ENCODE measurements at regions of chr12 and their contacts with region 1.

Region 1: GRCh38 chr12:106903241-106903945 is 52.3 kb upstream of the TMEM263 start:
- DNase-seq: peak; percentile 56
- H3K4me3 ChIP-seq: peak overlapping the region; percentile 57
- H3K27ac ChIP-seq: no peak overlapping the region
- H3K27me3 ChIP-seq: no peaks in the 10 kb centered on the region
- CTCF ChIP-seq: no peak

Region 2: DNA sequence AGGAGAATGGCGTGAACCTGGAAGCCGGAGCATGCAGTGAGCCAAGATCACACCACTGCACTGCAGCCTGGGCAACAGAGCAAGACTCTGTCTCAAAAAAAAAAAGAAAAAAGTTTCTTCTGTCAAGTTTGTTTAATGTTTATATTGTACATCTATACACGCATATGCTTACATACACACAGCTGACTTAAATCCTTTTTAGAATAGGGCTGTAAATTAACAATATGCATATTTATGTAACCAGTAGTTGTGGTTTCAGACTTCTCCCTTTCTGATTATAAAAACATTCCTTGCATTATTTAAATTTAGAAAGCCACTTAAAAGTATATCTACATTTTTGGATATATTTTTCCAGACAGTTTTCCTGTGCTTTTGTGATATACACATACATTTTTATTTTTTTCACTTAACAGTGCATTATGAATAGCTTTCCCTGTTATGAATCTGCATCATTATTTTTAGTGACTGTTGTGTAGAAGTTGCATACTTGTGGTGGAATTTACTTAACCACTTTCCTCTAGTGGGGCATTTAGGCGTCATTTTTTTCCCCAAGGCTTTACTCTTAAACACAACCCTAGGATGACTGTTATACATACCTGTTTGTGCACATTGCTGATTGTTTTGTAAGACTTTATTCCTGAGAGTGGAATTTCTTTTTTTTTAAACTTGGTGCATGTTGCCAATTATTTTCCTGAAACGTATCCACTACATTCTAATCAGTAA is 516.4 kb before region 1 on chr12:
- in situ Hi-C with region 1: loop called (anchors 25 kb)
- DNase-seq: no peak
- H3K4me3 ChIP-seq: no peak overlapping the region
- H3K27ac ChIP-seq: no peak overlapping the region
- H3K27me3 ChIP-seq: no peaks in the 10 kb centered on the region
- CTCF ChIP-seq: no peak

Region 3: DNA sequence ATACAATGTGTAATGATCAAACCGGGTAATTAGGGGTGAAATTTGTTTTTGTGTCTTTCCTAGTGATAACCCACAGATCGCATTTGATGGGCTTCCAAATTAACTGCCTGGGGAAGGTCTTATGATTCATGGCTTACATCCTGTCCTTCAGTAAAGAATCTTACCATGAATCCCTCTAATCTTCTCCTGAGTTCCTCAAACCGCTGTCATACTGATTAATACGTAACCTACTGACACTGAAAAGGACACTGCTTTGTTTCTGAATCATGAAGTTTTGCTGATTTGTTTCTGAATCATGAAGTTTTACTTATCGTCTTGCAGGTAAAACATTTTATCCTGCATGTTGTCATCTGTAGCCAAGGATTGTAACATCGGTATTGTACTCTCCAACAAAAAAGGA is 242.0 kb after region 1 on chr12:
- in situ Hi-C with region 1: no loop called
- DNase-seq: peak; percentile 27
- H3K4me3 ChIP-seq: no peak overlapping the region
- H3K27ac ChIP-seq: no peak overlapping the region
- H3K27me3 ChIP-seq: no peaks in the 10 kb centered on the region
- CTCF ChIP-seq: no peak

Region 4: DNA sequence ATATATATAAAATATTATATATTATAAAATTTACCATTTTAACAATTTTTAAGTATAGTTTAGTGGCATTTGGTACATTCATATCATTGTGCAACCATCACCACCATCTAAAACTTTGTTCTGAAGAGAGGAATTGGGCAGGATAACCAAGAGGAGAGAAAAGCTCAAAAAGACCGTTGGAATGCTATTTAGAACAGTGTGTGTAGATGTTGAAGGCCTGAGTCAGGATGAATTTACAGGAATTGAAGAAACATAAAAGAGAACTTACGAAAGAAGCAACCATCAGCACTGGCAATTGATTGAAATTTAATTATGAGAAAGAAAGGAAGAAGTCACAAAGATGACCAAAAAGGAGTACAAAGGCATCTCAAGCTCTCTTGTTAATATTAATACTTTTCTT is 585.3 kb after region 1 on chr12:
- in situ Hi-C with region 1: no loop called
- DNase-seq: no peak
- H3K4me3 ChIP-seq: no peak overlapping the region
- H3K27ac ChIP-seq: no peak overlapping the region
- H3K27me3 ChIP-seq: no peaks in the 10 kb centered on the region
- CTCF ChIP-seq: no peak

Measured in brain microvascular endothelial cell (primary cell).